ENCODE measurements at regions of chr1 and their contacts with region 1.

Region 1: GRCh38 chr1:28359592-28360239 is 9.8 kb upstream of the PHACTR4 start:
- DNase-seq: peak; percentile 48 to 78 (median 60)
- H3K4me3 ChIP-seq: no peak overlapping the region
- H3K4me3 Mint-ChIP-seq: no peak overlapping the region
- H3K27ac ChIP-seq: no peak overlapping the region
- H3K27ac Mint-ChIP-seq: no peak overlapping the region
- H3K4me1 ChIP-seq: no peaks in the 10 kb centered on the region
- H3K4me1 Mint-ChIP-seq: peaks cover 1 to 4% (median 3%) of the 10 kb centered on the region in 3 donors
- H3K27me3 ChIP-seq: no peaks in the 10 kb centered on the region
- H3K27me3 Mint-ChIP-seq: no peaks in the 10 kb centered on the region

Region 2: GRCh38 chr1:28378906-28379305 is 19.2 kb after region 1 on chr1:
- CTCF ChIA-PET with region 1: interaction called, 10 read pairs
- POLR2A ChIA-PET with region 1: no interaction called
- DNase-seq: no peak
- H3K4me3 ChIP-seq: no peak overlapping the region
- H3K4me3 Mint-ChIP-seq: no peak overlapping the region
- H3K27ac ChIP-seq: no peak overlapping the region
- H3K27ac Mint-ChIP-seq: peak overlapping the region in 2 of 8 donors; percentile 7 to 95
- H3K4me1 ChIP-seq: no peaks in the 10 kb centered on the region
- H3K4me1 Mint-ChIP-seq: peaks cover 30 to 44% (median 44%) of the 10 kb centered on the region in 3 donors
- H3K27me3 ChIP-seq: no peaks in the 10 kb centered on the region
- H3K27me3 Mint-ChIP-seq: no peaks in the 10 kb centered on the region

Measured in CD8-positive, alpha-beta memory T cell (primary cell).